ENCODE measurements at regions of chr15 and their contacts with region 1.

Region 1: GRCh38 chr15:45205192-45205591 is 17.4 kb upstream of the SHF start:
- DNase-seq: peak; percentile 69
- ATAC-seq: peak; percentile 22; the same call in 1 of the 2 replicates
- H3K4me3 ChIP-seq: no peak overlapping the region
- H3K27ac ChIP-seq: no peak overlapping the region
- H3K4me1 ChIP-seq: no peaks in the 10 kb centered on the region
- H3K27me3 ChIP-seq: no peaks in the 10 kb centered on the region; the same call in 1 of the 2 replicates
- CTCF ChIP-seq: peak; percentile 85
- POLR2A ChIP-seq: no peak
- RAD21 ChIP-seq: peak; percentile 80

Region 2: GRCh38 chr15:45166834-45167630 is 38.2 kb before region 1 on chr15:
- CTCF ChIA-PET with region 1: interaction called, 15 read pairs
- POLR2A ChIA-PET with region 1: no interaction called
- dilution Hi-C with region 1: no loop called
- in situ Hi-C with region 1: no loop called
- intact Hi-C with region 1: loop called (anchors 1 kb)
- DNase-seq: peak; percentile 75
- ATAC-seq: peak; percentile 85
- H3K4me3 ChIP-seq: peak overlapping the region; percentile 59
- H3K27ac ChIP-seq: peak overlapping the region; percentile 91
- H3K4me1 ChIP-seq: peaks cover 8% of the 10 kb centered on the region
- H3K27me3 ChIP-seq: no peaks in the 10 kb centered on the region
- CTCF ChIP-seq: peak; percentile 65
- POLR2A ChIP-seq: peak; percentile 46; the same call in 1 of the 2 replicates
- RAD21 ChIP-seq: peak; percentile 39

Region 3: DNA sequence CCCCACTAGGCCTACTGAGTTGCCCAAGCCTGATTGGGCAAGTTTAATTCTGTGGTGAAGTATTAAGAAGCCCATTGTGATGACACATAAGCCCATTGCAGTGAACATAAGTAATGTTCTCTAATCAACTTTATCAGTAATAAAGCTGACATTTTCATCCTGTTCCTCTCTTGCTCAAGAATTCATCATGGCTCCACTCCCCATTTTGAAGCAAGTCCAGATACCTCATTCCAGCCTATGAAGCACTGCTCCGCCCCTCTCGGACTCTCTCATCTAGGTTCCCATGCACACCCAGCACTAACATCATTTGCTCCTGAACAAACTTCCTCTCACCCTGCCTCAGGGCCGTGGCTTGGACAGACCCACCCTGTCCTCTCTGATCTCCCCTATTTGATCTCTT is 27.9 kb before region 1 on chr15:
- CTCF ChIA-PET with region 1: no interaction called
- POLR2A ChIA-PET with region 1: no interaction called
- dilution Hi-C with region 1: no loop called
- in situ Hi-C with region 1: no loop called
- intact Hi-C with region 1: no loop called
- DNase-seq: no peak
- ATAC-seq: no peak
- H3K4me3 ChIP-seq: no peak overlapping the region
- H3K27ac ChIP-seq: no peak overlapping the region
- H3K4me1 ChIP-seq: no peaks in the 10 kb centered on the region
- H3K27me3 ChIP-seq: no peaks in the 10 kb centered on the region
- CTCF ChIP-seq: no peak
- POLR2A ChIP-seq: no peak
- RAD21 ChIP-seq: no peak

Region 4: DNA sequence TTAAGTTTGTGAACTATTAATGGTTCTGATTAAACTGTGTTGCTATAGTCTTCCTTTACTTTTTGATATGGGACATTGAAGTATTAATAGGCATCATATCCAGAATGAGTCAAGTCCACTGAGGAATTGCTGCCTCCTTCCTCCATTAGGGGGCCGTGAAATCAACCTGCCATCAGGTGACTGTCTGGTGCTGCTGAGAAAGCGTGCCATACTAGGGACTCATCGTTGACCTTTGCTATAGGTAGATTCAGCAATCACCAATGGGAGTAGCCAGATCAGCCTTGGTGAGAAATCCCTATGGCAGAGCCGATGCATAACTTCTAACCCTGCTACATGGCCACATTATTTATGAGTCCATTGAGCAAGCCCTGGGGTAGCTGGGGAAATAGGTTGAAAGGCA is 16.8 kb after region 1 on chr15:
- CTCF ChIA-PET with region 1: interaction called, 15 read pairs
- POLR2A ChIA-PET with region 1: no interaction called
- dilution Hi-C with region 1: no loop called
- in situ Hi-C with region 1: no loop called
- intact Hi-C with region 1: no loop called
- DNase-seq: no peak
- ATAC-seq: no peak
- H3K4me3 ChIP-seq: no peak overlapping the region
- H3K27ac ChIP-seq: no peak overlapping the region
- H3K4me1 ChIP-seq: no peaks in the 10 kb centered on the region
- H3K27me3 ChIP-seq: peaks cover 13% of the 10 kb centered on the region; the same call in 1 of the 2 replicates
- CTCF ChIP-seq: no peak
- POLR2A ChIP-seq: no peak
- RAD21 ChIP-seq: no peak

Region 5: GRCh38 chr15:45249125-45249780 is 44.1 kb after region 1 on chr15:
- CTCF ChIA-PET with region 1: no interaction called
- POLR2A ChIA-PET with region 1: no interaction called
- dilution Hi-C with region 1: no loop called
- in situ Hi-C with region 1: no loop called
- intact Hi-C with region 1: loop called (anchors 5 kb)
- DNase-seq: no peak
- ATAC-seq: no peak
- H3K4me3 ChIP-seq: no peak overlapping the region
- H3K27ac ChIP-seq: no peak overlapping the region
- H3K4me1 ChIP-seq: no peaks in the 10 kb centered on the region
- H3K27me3 ChIP-seq: no peaks in the 10 kb centered on the region
- CTCF ChIP-seq: no peak
- POLR2A ChIP-seq: no peak
- RAD21 ChIP-seq: no peak

Region 6: DNA sequence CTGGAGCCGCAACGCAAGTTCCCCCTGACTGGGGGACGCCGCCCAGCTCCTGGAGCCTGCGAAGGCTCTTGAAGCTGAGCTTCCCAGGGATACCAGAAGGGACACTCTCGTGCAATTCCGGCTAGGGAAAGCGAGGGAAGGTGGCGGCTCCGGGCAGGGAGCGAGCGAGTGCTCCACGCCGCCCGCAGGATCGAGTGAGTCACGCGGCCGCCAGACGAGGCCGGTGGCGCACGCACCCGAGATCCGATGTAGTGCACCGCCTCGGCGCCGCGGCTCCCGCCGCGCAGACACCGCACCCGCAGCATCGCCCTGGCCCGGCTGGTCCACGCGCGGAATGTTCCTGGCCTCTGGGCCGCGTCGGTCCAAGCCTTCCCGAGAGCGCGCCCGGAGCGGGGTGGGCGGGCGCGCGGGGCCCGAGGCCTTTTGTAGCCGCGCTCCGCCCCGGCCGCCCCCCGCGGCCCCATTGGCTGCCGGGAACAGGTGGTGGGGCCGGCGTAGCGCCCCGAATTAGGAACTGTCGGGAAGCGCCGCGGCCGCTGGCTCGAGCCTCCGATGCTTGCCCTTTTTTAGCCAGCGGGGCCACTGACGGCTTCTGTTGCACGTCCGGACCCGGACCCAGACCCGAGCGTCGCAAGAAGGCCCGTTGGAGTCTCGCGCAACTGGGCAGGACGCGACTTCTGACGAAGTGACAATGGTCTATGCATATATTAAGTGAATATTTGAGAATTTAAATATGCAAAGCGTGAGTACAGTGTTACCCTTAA is 173.1 kb after region 1 on chr15 and contains the start of gene GATM:
- CTCF ChIA-PET with region 1: no interaction called
- POLR2A ChIA-PET with region 1: no interaction called
- dilution Hi-C with region 1: no loop called
- in situ Hi-C with region 1: no loop called
- intact Hi-C with region 1: loop called (anchors 5 kb)
- DNase-seq: peak; percentile 83
- ATAC-seq: peak; percentile 99
- H3K4me3 ChIP-seq: peak within 1 kb of the TSS; percentile 48
- H3K27ac ChIP-seq: no peak within 1 kb of the TSS
- H3K4me1 ChIP-seq: 0 out of 2 replicates have a peak, but pooled peaks cover 2% of the 10 kb centered on the region
- H3K27me3 ChIP-seq: peaks cover 47% of the 10 kb centered on the region
- CTCF ChIP-seq: peak; percentile 55
- POLR2A ChIP-seq: no peak
- RAD21 ChIP-seq: no peak
- total RNA-seq, gene GATM: 0.18 and 0.28 TPM in 2 replicates

Region 7: DNA sequence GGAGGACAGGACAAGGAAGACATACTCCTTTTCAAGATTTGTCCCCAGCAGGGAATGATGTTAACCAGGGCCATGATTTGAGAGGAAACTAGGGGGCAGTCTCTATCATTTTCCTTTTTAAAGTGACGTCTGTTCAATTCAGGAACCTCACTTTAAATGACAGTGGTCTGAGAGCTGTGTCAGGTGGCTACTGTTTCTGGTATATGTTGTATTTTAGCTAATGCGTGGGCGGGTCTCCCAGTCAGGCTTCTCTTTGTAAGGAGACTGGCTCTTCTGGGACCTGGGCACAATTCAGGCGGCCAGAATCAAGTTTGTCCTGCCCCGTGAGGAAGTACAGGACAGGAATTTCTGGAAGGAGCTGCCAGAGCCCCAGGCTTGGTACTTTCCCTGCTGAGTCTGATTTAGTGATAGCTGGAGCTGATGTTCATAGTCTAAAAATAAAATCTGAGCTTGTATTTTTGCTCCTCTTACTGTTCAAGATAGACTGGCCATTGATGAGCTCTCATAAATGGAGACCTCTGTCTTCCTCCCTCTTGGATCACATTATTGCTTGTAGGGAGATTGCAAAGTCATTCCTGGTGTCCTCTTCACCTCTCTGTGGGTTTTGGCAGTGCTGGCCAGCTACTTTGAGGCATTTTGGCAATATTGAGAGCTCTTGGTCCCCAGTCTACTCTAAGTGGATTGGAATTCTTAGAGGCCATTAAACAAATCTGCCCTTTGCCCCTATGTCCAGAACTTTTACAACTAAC is 455.2 kb after region 1 on chr15:
- CTCF ChIA-PET with region 1: no interaction called
- POLR2A ChIA-PET with region 1: no interaction called
- dilution Hi-C with region 1: no loop called
- in situ Hi-C with region 1: no loop called
- intact Hi-C with region 1: no loop called
- DNase-seq: peak; percentile 28
- ATAC-seq: peak; percentile 56
- H3K4me3 ChIP-seq: no peak overlapping the region
- H3K27ac ChIP-seq: no peak overlapping the region
- H3K4me1 ChIP-seq: peaks cover 3% of the 10 kb centered on the region
- H3K27me3 ChIP-seq: no peaks in the 10 kb centered on the region
- CTCF ChIP-seq: no peak
- POLR2A ChIP-seq: no peak
- RAD21 ChIP-seq: no peak